ENCODE measurements at regions of chr16 and their contacts with region 1.

Region 1: DNA sequence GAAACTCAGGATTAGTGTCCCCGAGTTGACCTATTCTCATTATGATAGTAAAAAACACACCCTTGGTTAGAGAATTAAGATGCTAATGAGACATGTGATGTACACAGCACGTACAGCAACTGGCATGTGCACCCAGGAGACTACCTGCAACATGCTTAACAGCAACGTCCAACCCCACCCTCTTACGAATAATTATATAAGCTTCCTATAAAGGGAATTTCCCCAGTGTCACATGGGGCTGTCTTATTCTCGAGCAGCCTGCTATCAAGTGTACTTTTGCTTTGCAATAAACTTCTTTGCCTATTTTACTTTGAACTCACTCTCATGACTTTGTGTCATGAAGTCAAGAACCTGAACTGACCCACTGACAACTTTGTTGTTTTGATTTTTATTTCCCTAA is 62.4 kb upstream of the PMFBP1 start:
- DNase-seq: no peak
- H3K4me3 ChIP-seq: no peak overlapping the region
- H3K27ac ChIP-seq: no peak overlapping the region
- H3K4me1 ChIP-seq: no peaks in the 10 kb centered on the region
- H3K27me3 ChIP-seq: no peaks in the 10 kb centered on the region
- CTCF ChIP-seq: no peak
- EP300 ChIP-seq: no peak
- POLR2A ChIP-seq: no peak

Region 2: GRCh38 chr16:72051818-72052217 is 182.6 kb before region 1 on chr16:
- intact Hi-C with region 1: no loop called
- DNase-seq: no peak
- H3K4me3 ChIP-seq: no peak overlapping the region
- H3K27ac ChIP-seq: no peak overlapping the region
- H3K4me1 ChIP-seq: no peaks in the 10 kb centered on the region
- H3K27me3 ChIP-seq: no peaks in the 10 kb centered on the region
- CTCF ChIP-seq: no peak
- EP300 ChIP-seq: no peak
- POLR2A ChIP-seq: no peak

Region 3: DNA sequence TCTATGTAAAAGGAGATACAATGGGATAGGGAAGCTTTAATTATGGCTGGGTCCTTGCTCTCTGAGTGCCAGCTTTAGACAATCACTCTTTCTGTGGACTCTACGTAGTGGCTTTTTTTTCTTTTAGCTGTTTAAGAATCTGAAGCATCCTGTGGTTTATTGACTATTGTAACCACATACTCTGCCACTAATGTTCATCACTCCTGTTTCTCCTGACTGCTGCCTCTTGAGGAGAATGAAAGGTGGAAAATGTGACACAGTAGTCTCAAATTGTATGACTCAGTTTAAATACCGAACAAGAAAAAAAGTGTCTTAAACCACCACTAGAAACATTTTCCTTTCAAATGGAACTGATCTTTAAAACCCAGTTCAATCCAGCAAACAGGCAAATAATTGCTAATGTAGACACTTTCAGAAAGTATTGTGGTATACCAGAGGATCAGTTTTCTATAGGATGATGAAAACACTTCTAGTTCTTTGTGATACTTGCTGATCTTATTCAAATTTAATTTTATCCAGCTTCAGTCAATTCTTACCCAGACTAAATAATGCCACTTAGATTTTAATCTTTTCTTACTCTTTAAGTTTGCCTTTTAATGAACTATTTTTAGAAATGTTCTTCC is 240.2 kb after region 1 on chr16:
- intact Hi-C with region 1: loop called in 1 of 4 experiments (anchors 10 kb)
- DNase-seq: no peak
- H3K4me3 ChIP-seq: no peak overlapping the region
- H3K27ac ChIP-seq: no peak overlapping the region
- H3K4me1 ChIP-seq: no peaks in the 10 kb centered on the region
- H3K27me3 ChIP-seq: no peaks in the 10 kb centered on the region
- CTCF ChIP-seq: no peak
- EP300 ChIP-seq: no peak
- POLR2A ChIP-seq: no peak

Measured in ovary (tissue), 10 donors.